Aorta (tissue), 5 donors: ENCODE measurements at regions of chr7 and their contacts with region 1.

Region 1: GRCh38 chr7:124784879-124785818 is 19.6 kb upstream of the GPR37 start:
- DNase-seq: peak; percentile 52 to 75
- ATAC-seq: peak; percentile 82
- H3K4me3 ChIP-seq: no peak overlapping the region
- H3K27ac ChIP-seq: no peak overlapping the region
- H3K4me1 ChIP-seq: no peaks in the 10 kb centered on the region
- H3K27me3 ChIP-seq: no peaks in the 10 kb centered on the region

Region 2: GRCh38 chr7:123797673-123798527 is 987.2 kb before region 1 on chr7:
- intact Hi-C with region 1: loop called in 1 of 2 experiments (anchors 10 kb)
- DNase-seq: no peak
- ATAC-seq: no peak
- H3K4me3 ChIP-seq: no peak overlapping the region
- H3K27ac ChIP-seq: no peak overlapping the region
- H3K4me1 ChIP-seq: peaks cover 0 to 3% of the 10 kb centered on the region in 2 donors
- H3K27me3 ChIP-seq: no peaks in the 10 kb centered on the region

Region 3: GRCh38 chr7:124168616-124169015 is 616.5 kb before region 1 on chr7:
- intact Hi-C with region 1: loop called in 1 of 2 experiments (anchors 5 kb)
- DNase-seq: no peak
- ATAC-seq: no peak
- H3K4me3 ChIP-seq: no peak overlapping the region
- H3K27ac ChIP-seq: no peak overlapping the region
- H3K4me1 ChIP-seq: no peaks in the 10 kb centered on the region
- H3K27me3 ChIP-seq: no peaks in the 10 kb centered on the region